ENCODE measurements at regions of chrX and their contacts with region 1.

Region 1: GRCh38 chrX:136658151-136658550 is 10.2 kb downstream of the CD40LG start:
- DNase-seq: peak in 5 of 14 experiments; percentile 16 to 50 (median 45)
- ATAC-seq: peak; percentile 10
- H3K4me3 ChIP-seq: peak overlapping the region; percentile 36
- H3K4me3 Mint-ChIP-seq: peak overlapping the region; percentile 99
- H3K27ac ChIP-seq: peak overlapping the region; percentile 74 to 75
- H3K27ac Mint-ChIP-seq: peak overlapping the region; percentile 92
- H3K4me1 ChIP-seq: peaks cover 76% of the 10 kb centered on the region
- H3K4me1 Mint-ChIP-seq: peaks cover 98% of the 10 kb centered on the region
- H3K27me3 ChIP-seq: no peaks in the 10 kb centered on the region
- H3K27me3 Mint-ChIP-seq: no peaks in the 10 kb centered on the region
- CTCF ChIP-seq: no peak

Region 2: DNA sequence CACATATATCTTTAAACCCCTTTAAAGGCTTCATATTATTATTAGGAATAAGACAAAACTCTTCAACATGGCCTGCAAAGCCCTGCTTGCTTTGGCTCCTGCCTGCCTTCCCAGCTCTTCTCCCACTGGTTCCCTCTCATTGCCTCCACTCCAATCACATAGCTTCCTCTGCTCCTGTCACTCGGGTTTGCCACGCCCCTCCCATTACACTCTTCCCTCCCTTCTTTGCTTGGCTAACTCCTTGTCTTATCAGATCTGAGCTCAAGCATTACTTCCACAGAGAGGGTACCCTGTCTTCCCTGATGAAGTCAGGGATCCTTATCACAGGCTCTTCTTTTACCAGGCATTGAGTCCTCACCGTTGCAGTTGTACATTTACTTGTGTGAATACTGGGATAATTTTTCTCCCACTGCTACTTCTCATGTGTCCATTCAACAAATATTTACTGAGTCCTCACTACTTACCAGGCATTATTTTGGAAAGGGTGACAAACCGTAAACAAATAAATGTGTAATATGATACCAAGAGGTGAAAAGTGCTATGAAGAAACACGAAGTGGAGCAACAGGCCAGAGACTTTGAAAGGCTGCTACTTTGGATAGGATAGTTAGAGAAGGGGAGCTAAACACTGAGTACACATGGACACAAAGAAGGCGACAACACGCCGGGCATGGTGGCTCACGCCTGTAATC is 129.4 kb before region 1 on chrX:
- CTCF ChIA-PET with region 1: no interaction called
- POLR2A ChIA-PET with region 1: no interaction called
- intact Hi-C with region 1: no loop called
- DNase-seq: no peak
- ATAC-seq: no peak
- H3K4me3 ChIP-seq: no peak overlapping the region
- H3K4me3 Mint-ChIP-seq: no peak overlapping the region
- H3K27ac ChIP-seq: no peak overlapping the region
- H3K27ac Mint-ChIP-seq: no peak overlapping the region
- H3K4me1 ChIP-seq: no peaks in the 10 kb centered on the region
- H3K4me1 Mint-ChIP-seq: no peaks in the 10 kb centered on the region
- H3K27me3 ChIP-seq: no peaks in the 10 kb centered on the region
- H3K27me3 Mint-ChIP-seq: no peaks in the 10 kb centered on the region
- CTCF ChIP-seq: no peak

Region 3: GRCh38 chrX:136616987-136617685 is 41.0 kb before region 1 on chrX:
- CTCF ChIA-PET with region 1: no interaction called
- POLR2A ChIA-PET with region 1: interaction called, 17 read pairs
- intact Hi-C with region 1: loop called in 1 of 2 experiments (anchors 5 kb)
- DNase-seq: peak in 5 of 14 experiments; percentile 14 to 72 (median 63)
- ATAC-seq: peak; percentile 85
- H3K4me3 ChIP-seq: no peak overlapping the region
- H3K4me3 Mint-ChIP-seq: peak overlapping the region; percentile 75
- H3K27ac ChIP-seq: peak overlapping the region; percentile 29 to 58
- H3K27ac Mint-ChIP-seq: peak overlapping the region; percentile 86
- H3K4me1 ChIP-seq: peaks cover 57% of the 10 kb centered on the region
- H3K4me1 Mint-ChIP-seq: peaks cover 64% of the 10 kb centered on the region
- H3K27me3 ChIP-seq: no peaks in the 10 kb centered on the region
- H3K27me3 Mint-ChIP-seq: no peaks in the 10 kb centered on the region
- CTCF ChIP-seq: no peak

Region 4: DNA sequence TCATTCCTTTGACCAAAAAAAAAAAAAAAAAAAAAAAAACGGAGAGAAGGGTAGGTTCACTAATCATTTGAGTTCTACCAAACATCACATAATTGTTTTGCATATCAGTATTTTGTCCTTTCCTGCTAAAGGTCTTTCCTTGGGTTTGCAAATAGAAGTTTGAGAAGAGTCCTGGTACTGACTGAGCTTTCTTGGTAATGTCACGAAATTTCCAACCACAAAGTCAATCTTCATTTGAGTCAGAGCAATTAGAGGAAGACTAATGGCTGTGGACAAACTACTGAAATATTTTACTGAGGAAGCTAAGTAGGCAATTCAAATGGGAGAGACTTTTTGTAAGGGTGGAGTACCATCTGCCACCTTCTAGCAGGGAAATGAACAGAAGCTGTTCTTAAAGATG is 31.9 kb before region 1 on chrX:
- CTCF ChIA-PET with region 1: interaction called, 3 read pairs
- POLR2A ChIA-PET with region 1: interaction called, 70 read pairs
- intact Hi-C with region 1: no loop called
- DNase-seq: no peak
- ATAC-seq: no peak
- H3K4me3 ChIP-seq: no peak overlapping the region
- H3K4me3 Mint-ChIP-seq: peak overlapping the region; percentile 31
- H3K27ac ChIP-seq: peak overlapping the region in 1 of 2 donors; percentile 62
- H3K27ac Mint-ChIP-seq: peak overlapping the region; percentile 69
- H3K4me1 ChIP-seq: peaks cover 66% of the 10 kb centered on the region
- H3K4me1 Mint-ChIP-seq: peaks cover 98% of the 10 kb centered on the region
- H3K27me3 ChIP-seq: no peaks in the 10 kb centered on the region
- H3K27me3 Mint-ChIP-seq: no peaks in the 10 kb centered on the region
- CTCF ChIP-seq: no peak

Region 5: DNA sequence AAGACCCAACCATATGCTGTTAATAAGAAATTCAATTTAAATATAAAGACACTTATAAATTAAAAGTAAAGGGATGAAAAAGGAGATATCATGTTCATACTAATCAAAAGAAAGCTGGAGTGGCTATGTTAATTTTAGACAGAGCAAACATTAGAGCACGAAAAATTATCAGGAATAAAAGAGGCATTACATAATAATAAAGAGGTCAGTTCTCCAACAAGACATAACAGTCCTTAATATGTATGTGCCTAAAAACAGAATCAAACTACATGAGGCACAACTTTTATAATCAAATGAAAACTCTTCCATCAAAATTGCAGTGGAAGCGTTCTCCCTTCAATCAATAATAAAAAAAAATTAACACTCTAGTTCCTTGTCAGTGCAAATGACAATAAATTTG is 59.9 kb after region 1 on chrX:
- CTCF ChIA-PET with region 1: no interaction called
- POLR2A ChIA-PET with region 1: no interaction called
- intact Hi-C with region 1: no loop called
- DNase-seq: no peak
- ATAC-seq: no peak
- H3K4me3 ChIP-seq: no peak overlapping the region
- H3K4me3 Mint-ChIP-seq: no peak overlapping the region
- H3K27ac ChIP-seq: no peak overlapping the region
- H3K27ac Mint-ChIP-seq: peak overlapping the region; percentile 97
- H3K4me1 ChIP-seq: peaks cover 17% of the 10 kb centered on the region
- H3K4me1 Mint-ChIP-seq: peaks cover 62% of the 10 kb centered on the region
- H3K27me3 ChIP-seq: no peaks in the 10 kb centered on the region
- H3K27me3 Mint-ChIP-seq: no peaks in the 10 kb centered on the region
- CTCF ChIP-seq: no peak